ENCODE measurements at regions of chr12 and their contacts with region 1.

Region 1: GRCh38 chr12:15532364-15532977 is 210.2 kb downstream of the PTPRO start:
- DNase-seq: peak; percentile 63 to 75 (median 65)
- H3K4me3 ChIP-seq: no peak overlapping the region
- H3K27ac ChIP-seq: no peak overlapping the region
- H3K4me1 ChIP-seq: peaks cover 0 to 24% (median 4%) of the 10 kb centered on the region in 4 experiments
- H3K27me3 ChIP-seq: peaks cover 0 to 3% (median 0%) of the 10 kb centered on the region in 5 experiments

Region 2: DNA sequence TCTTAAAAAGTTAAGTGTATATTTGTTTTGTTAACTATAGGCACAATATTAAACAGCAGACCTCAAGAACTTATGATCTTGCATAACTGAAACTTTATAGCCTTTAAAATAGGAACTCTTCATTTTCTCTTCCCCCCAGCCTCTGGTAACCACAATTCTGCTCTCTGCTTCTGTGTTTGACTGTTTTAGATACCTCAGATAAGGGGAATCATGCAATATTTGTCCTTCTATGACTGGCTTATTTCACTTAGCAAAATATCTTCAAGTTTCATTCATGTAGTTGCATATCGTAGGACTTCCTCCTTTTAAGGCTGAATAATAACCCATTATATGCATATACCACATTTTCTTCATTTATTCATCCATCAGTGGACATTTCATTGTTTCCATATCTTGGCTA is 78.9 kb before region 1 on chr12:
- CTCF ChIA-PET with region 1: no interaction called
- POLR2A ChIA-PET with region 1: no interaction called
- DNase-seq: peak; percentile 10 to 70 (median 57)
- H3K4me3 ChIP-seq: no peak overlapping the region
- H3K27ac ChIP-seq: no peak overlapping the region
- H3K4me1 ChIP-seq: no peaks in the 10 kb centered on the region
- H3K27me3 ChIP-seq: peaks cover 0 to 4% (median 0%) of the 10 kb centered on the region in 5 experiments

Region 3: GRCh38 chr12:15472036-15472435 is 60.4 kb before region 1 on chr12:
- CTCF ChIA-PET with region 1: no interaction called
- POLR2A ChIA-PET with region 1: no interaction called
- DNase-seq: no peak
- H3K4me3 ChIP-seq: no peak overlapping the region
- H3K27ac ChIP-seq: no peak overlapping the region
- H3K4me1 ChIP-seq: no peaks in the 10 kb centered on the region
- H3K27me3 ChIP-seq: peaks cover 0 to 22% (median 6%) of the 10 kb centered on the region in 5 experiments

Region 4: DNA sequence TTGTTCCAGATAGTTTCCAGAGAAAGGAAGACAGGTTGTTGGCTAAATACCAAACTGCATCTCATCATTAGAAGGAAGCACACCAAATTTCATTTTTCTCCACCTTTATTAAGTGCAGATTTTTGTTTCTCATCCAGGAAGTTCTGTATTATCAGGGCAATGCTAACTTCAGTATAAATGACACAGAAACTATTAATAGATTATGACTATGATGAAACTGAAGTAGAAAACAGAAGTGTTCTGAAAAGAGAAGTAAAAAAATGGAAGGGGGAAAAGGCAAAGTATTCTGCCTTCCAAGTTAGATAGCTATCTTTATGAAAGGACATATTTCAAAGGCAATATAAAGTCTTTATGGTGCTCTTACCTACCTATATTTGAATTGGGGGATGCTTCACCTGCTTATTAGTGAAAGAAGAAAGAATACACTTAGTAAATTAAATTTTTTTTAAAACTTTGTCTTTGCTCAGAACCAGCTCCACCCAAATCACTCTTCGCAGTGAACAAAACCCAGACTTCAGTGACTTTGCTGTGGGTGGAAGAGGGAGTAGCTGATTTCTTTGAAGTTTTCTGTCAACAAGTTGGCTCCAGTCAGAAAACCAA is 13.7 kb after region 1 on chr12:
- CTCF ChIA-PET with region 1: interaction called, 14 read pairs
- POLR2A ChIA-PET with region 1: interaction called, 3 read pairs
- DNase-seq: peak in 2 of 3 donors; percentile 68 to 80
- H3K4me3 ChIP-seq: peak overlapping the region in 1 of 7 experiments; percentile 11
- H3K27ac ChIP-seq: peak overlapping the region in 1 of 2 experiments; percentile 64
- H3K4me1 ChIP-seq: peaks cover 6 to 36% (median 8%) of the 10 kb centered on the region in 4 experiments
- H3K27me3 ChIP-seq: no peaks in the 10 kb centered on the region

Region 5: DNA sequence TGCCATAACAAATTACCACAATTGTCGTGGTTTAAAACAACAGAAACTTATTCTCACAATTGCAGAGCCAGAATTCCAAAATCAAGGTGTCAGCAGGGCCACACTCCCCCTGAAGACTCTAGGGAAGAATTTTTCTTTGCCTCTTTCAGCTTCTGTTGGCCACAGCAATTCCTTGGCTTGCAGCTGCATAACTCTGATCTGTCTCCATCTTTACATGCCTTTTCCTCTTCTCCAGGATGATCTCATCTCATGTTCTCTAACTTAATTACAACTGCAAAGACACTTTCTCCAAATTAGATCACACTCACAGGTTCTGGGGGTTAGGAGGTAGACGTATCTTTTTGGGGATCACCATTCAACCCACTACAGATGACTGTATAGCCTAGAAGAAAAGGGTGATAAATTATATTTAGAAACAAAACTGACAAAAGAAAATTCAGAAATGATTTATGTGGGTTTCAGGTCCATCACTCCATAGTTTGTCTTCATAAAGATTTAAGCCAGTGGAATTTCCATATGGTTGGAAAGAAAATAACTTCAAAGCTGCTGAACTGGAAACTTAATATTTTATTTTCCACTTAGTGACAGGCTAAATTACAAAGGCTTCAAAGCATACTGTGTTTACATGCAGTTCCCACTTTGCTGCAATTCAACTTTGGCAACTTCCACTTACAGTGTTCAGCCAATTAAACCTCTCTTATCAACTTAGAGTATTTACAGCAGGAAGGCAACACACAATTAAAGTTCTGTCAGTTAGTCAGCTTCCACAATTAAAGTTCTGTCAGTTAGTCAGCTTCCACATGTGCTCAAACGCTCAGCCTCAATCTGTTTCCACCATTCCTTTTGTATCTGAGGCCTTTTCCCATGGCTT is 43.4 kb after region 1 on chr12:
- CTCF ChIA-PET with region 1: interaction called, 19 read pairs
- POLR2A ChIA-PET with region 1: no interaction called
- DNase-seq: peak in 2 of 3 donors; percentile 42 to 48
- H3K4me3 ChIP-seq: no peak overlapping the region
- H3K27ac ChIP-seq: no peak overlapping the region
- H3K4me1 ChIP-seq: peaks cover 2 to 12% (median 6%) of the 10 kb centered on the region in 4 experiments
- H3K27me3 ChIP-seq: peaks cover 0 to 3% (median 0%) of the 10 kb centered on the region in 5 experiments

Region 6: DNA sequence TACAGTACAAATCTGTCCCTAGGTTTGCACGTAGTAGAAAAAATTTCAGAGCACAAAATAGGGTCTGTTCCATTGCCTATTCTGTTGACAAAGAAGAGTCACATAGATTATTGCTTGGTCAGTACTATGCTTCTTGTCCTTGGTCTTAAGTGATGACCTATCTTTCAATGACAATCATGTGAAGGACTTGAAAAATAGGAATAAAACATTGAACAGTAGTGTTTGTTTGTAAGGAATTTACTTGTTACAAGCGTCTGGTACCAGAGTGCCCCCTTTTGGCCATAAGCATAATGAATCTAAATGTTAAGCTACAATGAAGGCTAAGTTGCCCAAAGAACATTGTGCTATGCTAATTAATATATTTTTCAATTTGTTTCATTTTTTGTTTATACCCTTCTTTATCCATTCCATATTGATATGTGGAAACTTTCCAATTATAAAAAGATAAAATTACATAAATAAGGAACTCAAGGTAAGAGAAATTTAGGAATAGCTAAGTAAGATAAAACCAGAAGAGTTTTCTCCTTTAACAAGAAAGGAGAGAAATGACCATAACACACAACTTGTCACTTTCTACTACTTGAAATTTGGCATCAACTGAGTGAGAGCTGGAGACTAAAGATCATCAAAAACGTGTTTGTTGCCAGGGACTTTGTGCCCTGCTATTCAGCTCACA is 52.0 kb after region 1 on chr12:
- CTCF ChIA-PET with region 1: interaction called, 102 read pairs
- POLR2A ChIA-PET with region 1: no interaction called
- DNase-seq: peak; percentile 76 to 89 (median 82)
- H3K4me3 ChIP-seq: no peak overlapping the region
- H3K27ac ChIP-seq: no peak overlapping the region
- H3K4me1 ChIP-seq: no peaks in the 10 kb centered on the region
- H3K27me3 ChIP-seq: peaks cover 0 to 3% (median 0%) of the 10 kb centered on the region in 5 experiments

Region 7: GRCh38 chr12:15856097-15856982 is 323.9 kb after region 1 on chr12:
- CTCF ChIA-PET with region 1: interaction called, 14 read pairs
- POLR2A ChIA-PET with region 1: no interaction called
- DNase-seq: peak; percentile 70 to 84 (median 80)
- H3K4me3 ChIP-seq: no peak overlapping the region
- H3K27ac ChIP-seq: no peak overlapping the region
- H3K4me1 ChIP-seq: peaks cover 0 to 2% (median 1%) of the 10 kb centered on the region in 4 experiments
- H3K27me3 ChIP-seq: no peaks in the 10 kb centered on the region